ENCODE measurements at regions of chr6 and their contacts with region 1.

Region 1: DNA sequence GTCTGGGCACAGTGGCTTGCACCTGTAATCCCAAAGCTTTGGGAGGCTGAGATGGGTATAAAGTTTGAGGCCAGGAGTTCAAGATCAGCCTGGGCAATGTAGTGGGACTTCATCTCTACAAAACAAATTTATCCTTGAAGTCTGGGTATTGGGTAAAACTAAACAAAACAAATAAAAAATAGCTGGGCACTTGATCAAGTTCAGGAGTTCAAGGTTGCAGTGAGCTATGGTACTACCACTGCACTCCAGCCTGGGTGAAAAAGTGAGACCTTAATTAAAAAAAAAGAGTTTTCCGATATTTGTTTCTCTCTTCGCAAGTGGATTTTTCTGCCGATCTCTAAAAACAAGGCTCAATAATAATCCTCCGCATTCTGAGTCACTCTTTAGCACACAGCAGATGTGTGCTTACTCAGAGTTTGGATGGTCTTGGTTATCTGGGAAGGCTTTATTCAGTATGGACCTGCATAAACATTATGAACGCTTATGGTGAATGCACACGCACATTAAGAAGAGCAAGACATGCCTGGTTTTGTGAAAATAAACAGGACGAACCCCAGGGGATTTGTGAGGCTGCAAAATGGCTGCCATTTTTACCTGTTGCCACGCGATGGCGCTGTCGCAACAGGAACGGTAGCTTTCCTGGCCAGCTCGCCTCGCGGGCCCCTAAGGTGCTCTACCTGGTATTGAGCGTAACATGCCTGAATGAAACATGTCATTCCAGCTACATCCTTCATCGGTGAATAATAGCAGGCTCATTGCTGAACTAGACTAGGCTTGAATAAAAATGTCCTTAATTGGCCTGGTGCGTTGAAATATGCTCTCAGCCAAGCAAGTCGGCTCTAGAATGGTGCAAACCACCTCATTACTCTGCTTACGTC is 6.0 kb downstream of the OPN5 start:
- DNase-seq: peak in 2 of 3 donors; percentile 23 to 34
- H3K4me3 ChIP-seq: no peak overlapping the region
- H3K4me3 Mint-ChIP-seq: no peak overlapping the region
- H3K27ac ChIP-seq: no peak overlapping the region
- H3K27ac Mint-ChIP-seq: no peak overlapping the region
- H3K4me1 ChIP-seq: no peaks in the 10 kb centered on the region
- H3K4me1 Mint-ChIP-seq: peaks cover 1% of the 10 kb centered on the region
- H3K27me3 ChIP-seq: peaks cover 0 to 2% of the 10 kb centered on the region in 2 donors
- H3K27me3 Mint-ChIP-seq: peaks cover 0 to 11% (median 5%) of the 10 kb centered on the region in 3 donors
- CTCF ChIP-seq: peak; percentile 94

Region 2: DNA sequence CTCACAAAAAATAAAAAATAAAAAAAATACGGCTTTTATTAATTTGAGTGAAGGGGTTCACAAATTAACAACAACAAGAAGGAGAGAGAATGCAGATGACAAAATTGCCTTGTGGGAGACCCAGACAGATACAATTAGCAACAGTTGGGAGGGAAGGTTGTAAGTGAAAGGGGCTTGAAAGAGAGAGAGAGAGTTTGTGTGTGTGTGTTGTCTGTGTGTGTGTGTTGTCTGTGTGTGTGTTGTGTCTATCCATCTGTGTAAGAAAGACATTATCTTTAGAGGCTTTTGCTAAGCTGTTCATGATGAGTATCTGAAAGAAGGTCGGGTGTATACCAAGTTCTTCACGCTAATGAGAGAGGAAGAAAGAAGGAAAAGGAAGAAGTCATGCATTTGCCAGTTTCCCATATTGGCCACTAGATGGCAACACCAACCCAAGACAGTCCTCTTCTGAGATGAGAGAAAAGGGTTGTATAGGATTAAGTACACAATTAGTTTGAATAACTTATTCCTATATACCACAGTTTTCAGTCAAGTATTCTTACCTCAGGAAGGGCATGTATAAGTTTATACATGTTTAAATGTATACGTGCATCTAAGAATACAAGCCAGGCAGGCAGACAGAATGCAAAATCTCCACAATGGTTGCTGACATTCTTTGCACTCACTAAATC is 374.0 kb before region 1 on chr6:
- intact Hi-C with region 1: loop called in 1 of 2 experiments (anchors 10 kb)
- DNase-seq: peak; percentile 49 to 70 (median 63)
- H3K4me3 ChIP-seq: peak overlapping the region; percentile 44 to 99 (median 90)
- H3K4me3 Mint-ChIP-seq: peak overlapping the region; percentile 76 to 90
- H3K27ac ChIP-seq: peak overlapping the region in 1 of 2 donors; percentile 85
- H3K27ac Mint-ChIP-seq: peak overlapping the region in 4 of 7 donors; percentile 55 to 92 (median 81)
- H3K4me1 ChIP-seq: peaks cover 9 to 15% of the 10 kb centered on the region in 2 donors
- H3K4me1 Mint-ChIP-seq: peaks cover 14% of the 10 kb centered on the region
- H3K27me3 ChIP-seq: no peaks in the 10 kb centered on the region
- H3K27me3 Mint-ChIP-seq: peaks cover 0 to 2% (median 0%) of the 10 kb centered on the region in 3 donors
- CTCF ChIP-seq: peak; percentile 94

Region 3: DNA sequence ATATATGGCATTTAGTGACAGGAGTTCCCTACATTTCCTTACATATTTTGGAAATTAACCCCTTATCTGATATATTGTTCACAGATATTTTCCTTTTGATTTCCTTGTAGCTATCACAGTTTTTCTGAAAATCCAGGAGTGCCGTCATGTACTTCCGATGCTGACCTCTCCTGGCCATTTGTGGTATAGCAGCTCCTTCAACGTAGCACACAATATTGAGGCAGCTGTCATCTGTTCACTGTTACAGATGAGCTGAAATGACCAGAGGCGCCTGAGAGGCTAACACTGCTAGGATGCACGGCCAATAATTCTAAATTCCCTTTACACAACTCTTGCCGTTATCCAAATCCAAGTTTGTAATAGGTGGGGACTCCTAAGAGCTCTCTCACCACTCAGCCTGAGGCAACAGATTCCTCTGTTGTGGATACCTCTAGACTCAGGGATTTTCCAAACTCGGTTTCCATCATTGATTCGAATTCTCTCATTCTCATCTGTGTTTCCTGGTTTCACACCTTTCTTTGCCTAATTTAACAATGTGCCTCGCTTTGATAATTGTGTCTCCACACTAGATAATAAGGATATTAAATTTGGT is 1622.2 kb after region 1 on chr6:
- intact Hi-C with region 1: loop called in 1 of 2 experiments (anchors 5 kb)
- DNase-seq: peak; percentile 6 to 30 (median 22)
- H3K4me3 ChIP-seq: no peak overlapping the region
- H3K4me3 Mint-ChIP-seq: no peak overlapping the region
- H3K27ac ChIP-seq: no peak overlapping the region
- H3K27ac Mint-ChIP-seq: no peak overlapping the region
- H3K4me1 ChIP-seq: no peaks in the 10 kb centered on the region
- H3K4me1 Mint-ChIP-seq: no peaks in the 10 kb centered on the region
- H3K27me3 ChIP-seq: no peaks in the 10 kb centered on the region
- H3K27me3 Mint-ChIP-seq: peaks cover 0 to 5% (median 2%) of the 10 kb centered on the region in 3 donors
- CTCF ChIP-seq: peak; percentile 76